B cell (primary cell): ENCODE measurements at regions of chr13 and their contacts with region 1.

Region 1: GRCh38 chr13:47025791-47026447 is 129.1 kb upstream of the HTR2A start:
- DNase-seq: peak; percentile 12
- ATAC-seq: no peak
- H3K4me3 ChIP-seq: no peak overlapping the region
- H3K4me3 Mint-ChIP-seq: no peak overlapping the region
- H3K27ac ChIP-seq: no peak overlapping the region
- H3K27ac Mint-ChIP-seq: no peak overlapping the region
- H3K4me1 ChIP-seq: peaks cover 11 to 12% of the 10 kb centered on the region in 2 donors
- H3K4me1 Mint-ChIP-seq: peaks cover 17% of the 10 kb centered on the region
- H3K27me3 ChIP-seq: peaks cover 0 to 3% (median 0%) of the 10 kb centered on the region in 4 experiments
- H3K27me3 Mint-ChIP-seq: peaks cover 4% of the 10 kb centered on the region
- CTCF ChIP-seq: no peak

Region 2: GRCh38 chr13:46983881-46984280 is 42.0 kb before region 1 on chr13:
- CTCF ChIA-PET with region 1: no interaction called
- POLR2A ChIA-PET with region 1: no interaction called
- intact Hi-C with region 1: loop called (anchors 5 kb)
- DNase-seq: peak; percentile 69
- ATAC-seq: peak; percentile 51
- H3K4me3 ChIP-seq: peak overlapping the region in 2 of 5 experiments; percentile 12 to 52
- H3K4me3 Mint-ChIP-seq: peak overlapping the region; percentile 82
- H3K27ac ChIP-seq: peak overlapping the region; percentile 33 to 44
- H3K27ac Mint-ChIP-seq: peak overlapping the region; percentile 84
- H3K4me1 ChIP-seq: peaks cover 25 to 26% of the 10 kb centered on the region in 2 donors
- H3K4me1 Mint-ChIP-seq: peaks cover 26% of the 10 kb centered on the region
- H3K27me3 ChIP-seq: no peaks in the 10 kb centered on the region
- H3K27me3 Mint-ChIP-seq: peaks cover 2% of the 10 kb centered on the region
- CTCF ChIP-seq: no peak